ENCODE measurements at regions of chr18 and their contacts with region 1.

Region 1: GRCh38 chr18:35756506-35757117 is 175.1 kb downstream of the GALNT1 start:
- DNase-seq: peak; percentile 47
- H3K4me3 ChIP-seq: no peak overlapping the region
- H3K27ac ChIP-seq: no peak overlapping the region
- H3K4me1 ChIP-seq: no peaks in the 10 kb centered on the region
- H3K27me3 ChIP-seq: no peaks in the 10 kb centered on the region
- CTCF ChIP-seq: peak; percentile 48 to 86 (median 70)
- POLR2A ChIP-seq: no peak

Region 2: DNA sequence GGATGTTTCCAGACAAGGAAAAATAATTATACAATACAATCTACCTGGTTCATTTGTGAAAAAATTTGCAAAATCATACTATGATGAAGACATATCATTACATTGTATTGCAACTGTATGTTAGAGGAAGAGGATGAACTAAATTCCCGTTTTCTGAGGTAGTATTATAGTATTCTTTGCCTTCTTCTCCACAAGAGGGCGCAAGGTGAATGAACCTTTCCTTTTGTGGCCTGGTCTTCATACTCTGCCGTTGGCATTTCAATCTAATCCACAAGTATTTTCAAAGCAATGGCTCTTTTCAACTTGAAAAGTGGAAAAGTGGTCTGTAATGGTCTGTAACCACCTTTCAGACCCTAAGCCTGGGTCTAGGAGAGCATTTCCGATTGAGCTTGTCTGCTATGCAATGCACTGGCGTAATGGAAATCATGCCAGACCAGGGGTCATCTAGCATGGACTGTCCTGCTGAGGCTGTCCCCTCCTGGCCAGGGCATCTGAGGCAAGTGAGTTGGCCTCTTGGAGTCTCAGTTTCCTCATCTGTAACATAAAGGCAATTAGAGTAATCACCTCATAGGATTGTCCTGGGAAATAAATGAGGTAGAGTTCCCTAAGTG is 348.6 kb before region 1 on chr18:
- intact Hi-C with region 1: loop called (anchors 10 kb)
- DNase-seq: peak; percentile 51
- H3K4me3 ChIP-seq: no peak overlapping the region
- H3K27ac ChIP-seq: no peak overlapping the region
- H3K4me1 ChIP-seq: no peaks in the 10 kb centered on the region
- H3K27me3 ChIP-seq: no peaks in the 10 kb centered on the region
- CTCF ChIP-seq: peak; percentile 35 to 75 (median 71)
- POLR2A ChIP-seq: no peak

Region 3: GRCh38 chr18:35511428-35511827 is 245.2 kb before region 1 on chr18:
- intact Hi-C with region 1: no loop called
- DNase-seq: no peak
- H3K4me3 ChIP-seq: no peak overlapping the region
- H3K27ac ChIP-seq: no peak overlapping the region
- H3K4me1 ChIP-seq: no peaks in the 10 kb centered on the region
- H3K27me3 ChIP-seq: no peaks in the 10 kb centered on the region
- CTCF ChIP-seq: no peak
- POLR2A ChIP-seq: no peak

Region 4: DNA sequence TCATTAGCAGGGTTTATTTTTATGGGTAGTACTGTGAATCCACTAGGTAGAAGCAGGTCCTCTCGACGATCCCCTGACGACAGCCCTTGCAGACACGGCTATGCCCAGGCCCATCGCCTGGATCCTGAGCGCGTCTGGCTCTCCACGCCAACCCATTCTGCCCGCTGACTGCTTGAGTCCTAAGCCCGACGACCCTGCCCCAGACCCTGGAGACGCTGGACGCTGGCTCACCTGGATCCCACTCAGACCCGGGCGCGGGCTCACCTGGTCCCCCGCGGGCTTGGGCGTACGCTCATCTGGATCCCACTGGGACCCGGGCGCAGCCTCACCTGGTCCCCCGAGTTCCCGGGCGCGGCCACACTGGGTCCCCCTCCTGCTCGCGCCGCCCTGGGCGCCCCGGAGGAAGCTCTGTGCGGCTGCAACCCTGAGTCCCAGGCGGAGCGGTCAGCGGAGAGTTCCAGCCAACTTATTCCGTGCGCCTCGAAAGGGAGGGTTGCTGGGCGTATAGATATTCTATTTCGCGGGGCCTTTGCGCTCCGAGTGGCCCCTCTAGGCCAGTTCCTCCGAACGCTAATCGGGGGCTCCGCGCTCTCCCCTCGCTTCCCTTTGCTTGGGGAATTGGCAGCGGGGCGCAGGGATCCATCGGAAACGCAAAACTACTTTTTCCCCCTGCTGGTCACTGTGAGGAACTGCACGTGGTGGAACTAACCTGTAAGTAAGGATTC is 193.5 kb after region 1 on chr18:
- intact Hi-C with region 1: loop called (anchors 1 kb)
- DNase-seq: peak; percentile 52
- H3K4me3 ChIP-seq: peak overlapping the region; percentile 49 to 54
- H3K27ac ChIP-seq: peak overlapping the region; percentile 19 to 46
- H3K4me1 ChIP-seq: no peaks in the 10 kb centered on the region
- H3K27me3 ChIP-seq: no peaks in the 10 kb centered on the region
- CTCF ChIP-seq: peak; percentile 88 to 95 (median 90)
- POLR2A ChIP-seq: no peak